ENCODE measurements at regions of chr3 and their contacts with region 1.

Region 1: DNA sequence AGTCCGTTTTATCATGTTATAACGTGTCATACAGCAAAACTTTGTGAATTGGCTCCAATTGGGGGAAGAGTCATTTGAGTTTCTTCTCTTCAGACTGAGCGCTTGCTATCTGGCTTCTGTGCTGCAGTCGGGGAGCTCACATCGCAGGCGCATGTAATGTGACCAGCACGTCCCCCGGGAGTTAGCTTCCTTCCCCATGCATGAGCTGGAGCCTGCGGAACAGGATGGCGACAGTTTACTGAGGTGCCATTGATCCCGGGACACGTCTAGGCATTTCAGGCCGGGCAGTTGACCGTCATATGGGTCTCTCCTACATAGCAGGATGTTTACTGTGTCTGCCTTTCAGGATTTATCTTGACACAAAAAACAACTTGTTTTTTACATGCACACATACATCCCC is 44.8 kb downstream of the CMTM8 start:
- DNase-seq: peak; percentile 54 to 82
- ATAC-seq: peak; percentile 77 to 91 (median 83)
- H3K4me3 ChIP-seq: no peak overlapping the region
- H3K27ac ChIP-seq: peak overlapping the region in 6 of 10 donors; percentile 2 to 71 (median 56)
- H3K4me1 ChIP-seq: peaks cover 0 to 54% (median 21%) of the 10 kb centered on the region in 9 donors
- H3K27me3 ChIP-seq: no peaks in the 10 kb centered on the region
- CTCF ChIP-seq: no peak

Region 2: DNA sequence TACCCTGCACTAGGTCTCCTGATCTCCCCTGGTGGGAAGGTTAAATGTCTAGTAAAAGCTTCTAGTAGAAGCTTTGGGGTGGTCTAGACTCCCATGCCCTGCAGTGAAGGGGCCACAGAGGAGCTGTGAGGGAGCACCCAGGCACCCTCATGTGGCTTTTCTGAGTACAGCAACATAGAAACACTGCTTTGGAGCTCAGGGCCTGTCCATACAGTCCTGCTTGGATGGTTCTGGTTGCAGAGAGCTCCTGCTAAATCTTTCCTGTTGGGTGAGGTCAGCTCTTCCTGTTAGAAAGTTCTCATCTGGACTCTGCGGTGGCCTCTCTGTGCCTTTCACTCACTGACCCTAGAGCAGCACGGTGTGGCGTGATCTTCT is 129.1 kb before region 1 on chr3:
- intact Hi-C with region 1: no loop called
- DNase-seq: no peak
- ATAC-seq: peak in 1 of 8 donors; percentile 7
- H3K4me3 ChIP-seq: no peak overlapping the region
- H3K27ac ChIP-seq: no peak overlapping the region
- H3K4me1 ChIP-seq: no peaks in the 10 kb centered on the region
- H3K27me3 ChIP-seq: no peaks in the 10 kb centered on the region
- CTCF ChIP-seq: peak in 4 of 9 donors; percentile 9 to 15 (median 12)

Region 3: GRCh38 chr3:32194653-32195052 is 88.7 kb before region 1 on chr3:
- intact Hi-C with region 1: loop called in 1 of 10 experiments (anchors 5 kb)
- DNase-seq: no peak
- ATAC-seq: peak in 6 of 8 donors; percentile 30 to 73 (median 58)
- H3K4me3 ChIP-seq: no peak overlapping the region
- H3K27ac ChIP-seq: peak overlapping the region in 5 of 10 donors; percentile 9 to 53 (median 37)
- H3K4me1 ChIP-seq: peaks cover 0 to 42% (median 18%) of the 10 kb centered on the region in 9 donors
- H3K27me3 ChIP-seq: no peaks in the 10 kb centered on the region
- CTCF ChIP-seq: no peak

Region 4: GRCh38 chr3:32421991-32422859 is 138.9 kb after region 1 on chr3:
- intact Hi-C with region 1: no loop called
- DNase-seq: peak; percentile 85 to 89
- ATAC-seq: peak; percentile 84 to 93 (median 90)
- H3K4me3 ChIP-seq: no peak overlapping the region
- H3K27ac ChIP-seq: peak overlapping the region in 9 of 10 donors; percentile 45 to 90 (median 58)
- H3K4me1 ChIP-seq: peaks cover 8 to 86% (median 37%) of the 10 kb centered on the region in 9 donors
- H3K27me3 ChIP-seq: no peaks in the 10 kb centered on the region
- CTCF ChIP-seq: no peak

Region 5: DNA sequence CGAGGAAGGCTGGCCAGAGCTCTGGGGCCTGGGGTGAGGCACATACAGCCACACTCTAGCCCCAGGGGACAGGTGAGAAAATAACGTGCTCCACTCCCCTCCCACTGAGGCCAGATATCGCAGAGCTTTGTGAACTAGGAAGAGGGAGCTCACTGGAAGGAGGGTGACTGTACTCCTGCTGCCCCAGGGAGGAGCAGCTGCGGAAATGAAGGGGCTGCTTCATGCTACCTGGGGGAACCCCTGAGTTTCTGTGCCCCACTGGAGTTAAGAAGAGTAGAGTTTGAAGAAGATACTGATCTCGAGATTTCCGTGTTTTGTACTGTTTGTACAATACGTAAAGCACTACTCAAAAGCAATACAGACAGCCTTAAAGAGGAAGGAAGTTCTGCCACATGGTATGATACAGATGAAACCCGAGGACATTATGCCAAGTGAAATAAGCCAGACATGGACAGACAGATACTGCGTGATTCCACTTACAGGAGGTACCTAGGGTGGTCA is 174.7 kb after region 1 on chr3:
- intact Hi-C with region 1: loop called in 2 of 10 experiments (anchors 10 kb)
- DNase-seq: no peak
- ATAC-seq: peak in 6 of 8 donors; percentile 22 to 72 (median 52)
- H3K4me3 ChIP-seq: no peak overlapping the region
- H3K27ac ChIP-seq: peak overlapping the region in 2 of 10 donors; percentile 24 to 79
- H3K4me1 ChIP-seq: peaks cover 0 to 59% (median 6%) of the 10 kb centered on the region in 9 donors
- H3K27me3 ChIP-seq: no peaks in the 10 kb centered on the region
- CTCF ChIP-seq: no peak

Measured in heart right ventricle (tissue), 16 donors.